ENCODE measurements at regions of chr15 and their contacts with region 1.

Region 1: DNA sequence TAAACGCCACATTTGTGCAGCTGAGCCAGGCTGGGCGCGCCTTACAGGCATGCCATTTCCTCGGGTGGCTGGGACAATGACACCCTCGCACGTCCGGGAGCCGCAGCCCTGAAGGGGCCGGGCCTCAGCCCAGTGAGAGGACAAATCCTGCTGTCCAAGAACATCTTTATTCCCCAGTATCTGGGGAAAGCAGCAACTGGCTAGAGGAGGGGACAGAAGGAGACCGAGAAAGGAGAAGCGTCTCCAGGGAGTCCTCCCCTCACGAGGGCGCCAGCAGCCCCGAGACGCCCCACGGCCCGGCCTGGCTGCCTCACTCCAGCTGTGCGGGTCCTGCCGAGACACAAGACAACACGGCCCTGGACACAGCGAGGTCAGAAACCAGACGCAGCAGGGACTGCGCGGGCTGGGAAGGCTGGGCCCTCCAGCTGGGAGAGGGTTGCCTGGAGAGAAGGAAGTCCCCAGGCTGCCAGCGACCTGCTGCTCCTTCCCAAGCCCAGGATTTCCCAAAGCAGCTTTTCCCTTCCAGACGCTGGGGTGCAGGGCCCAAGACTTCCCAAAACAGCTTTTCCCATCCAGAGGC is 130.2 kb downstream of the CHSY1 start:
- H3K4me3 Mint-ChIP-seq: peak overlapping the region; percentile 30
- H3K27ac Mint-ChIP-seq: peak overlapping the region; percentile 64
- H3K4me1 Mint-ChIP-seq: peaks cover 60% of the 10 kb centered on the region
- H3K27me3 Mint-ChIP-seq: peaks cover 7% of the 10 kb centered on the region

Region 2: GRCh38 chr15:101167753-101168463 is 46.3 kb after region 1 on chr15:
- intact Hi-C with region 1: loop called (anchors 5 kb)
- H3K4me3 Mint-ChIP-seq: peak overlapping the region; percentile 70
- H3K27ac Mint-ChIP-seq: peak overlapping the region; percentile 98
- H3K4me1 Mint-ChIP-seq: peaks cover 52% of the 10 kb centered on the region
- H3K27me3 Mint-ChIP-seq: no peaks in the 10 kb centered on the region